Calu3 (cell line): ENCODE measurements at regions of chr15 and their contacts with region 1.

Region 1: DNA sequence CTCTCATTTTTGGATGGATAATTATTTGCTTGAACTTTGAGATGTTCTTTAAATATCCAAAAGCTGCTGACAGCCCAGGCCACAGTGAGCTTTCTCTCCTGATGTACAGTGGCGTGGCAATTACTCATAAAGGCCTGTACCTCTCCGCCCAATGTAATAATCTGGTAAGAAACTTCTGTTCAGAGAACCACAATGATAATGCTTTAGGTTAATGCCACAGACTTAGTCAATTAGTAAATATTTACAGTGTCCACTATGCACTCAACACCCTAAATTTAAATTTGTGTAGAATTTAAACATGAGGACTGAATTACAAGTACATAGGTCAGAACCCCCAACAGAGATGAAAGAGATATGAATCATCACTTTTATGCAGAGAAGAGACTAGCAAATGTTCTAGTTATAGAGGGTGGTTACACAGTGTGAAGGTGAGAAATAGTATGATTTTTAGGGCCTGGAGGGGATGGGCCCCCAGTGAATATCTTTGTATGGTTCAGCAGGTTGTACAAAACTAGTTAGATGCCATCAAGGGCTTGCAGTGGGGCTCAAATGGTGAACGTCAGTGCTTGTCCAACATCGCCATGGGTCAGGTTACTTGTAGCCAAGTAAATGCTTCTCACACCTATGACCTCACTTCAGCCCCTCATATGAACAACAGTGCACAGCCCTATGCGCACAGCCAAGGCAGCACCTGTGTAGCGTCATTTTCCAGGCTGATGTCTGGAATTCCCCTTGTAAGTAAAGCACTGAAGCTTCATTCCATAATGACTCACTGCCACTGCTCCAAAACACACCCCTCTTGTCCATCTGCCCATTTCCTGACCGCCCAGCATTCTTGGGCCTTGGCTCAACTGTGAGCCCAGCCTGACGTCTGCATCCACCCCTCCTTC is 13.3 kb downstream of the ABHD2 start:
- DNase-seq: peak; percentile 88
- H3K4me3 Mint-ChIP-seq: peak overlapping the region; percentile 1
- H3K27ac Mint-ChIP-seq: peak overlapping the region; percentile 69
- H3K4me1 Mint-ChIP-seq: peaks cover 66% of the 10 kb centered on the region
- H3K27me3 Mint-ChIP-seq: no peaks in the 10 kb centered on the region
- CTCF ChIP-seq: no peak

Region 2: DNA sequence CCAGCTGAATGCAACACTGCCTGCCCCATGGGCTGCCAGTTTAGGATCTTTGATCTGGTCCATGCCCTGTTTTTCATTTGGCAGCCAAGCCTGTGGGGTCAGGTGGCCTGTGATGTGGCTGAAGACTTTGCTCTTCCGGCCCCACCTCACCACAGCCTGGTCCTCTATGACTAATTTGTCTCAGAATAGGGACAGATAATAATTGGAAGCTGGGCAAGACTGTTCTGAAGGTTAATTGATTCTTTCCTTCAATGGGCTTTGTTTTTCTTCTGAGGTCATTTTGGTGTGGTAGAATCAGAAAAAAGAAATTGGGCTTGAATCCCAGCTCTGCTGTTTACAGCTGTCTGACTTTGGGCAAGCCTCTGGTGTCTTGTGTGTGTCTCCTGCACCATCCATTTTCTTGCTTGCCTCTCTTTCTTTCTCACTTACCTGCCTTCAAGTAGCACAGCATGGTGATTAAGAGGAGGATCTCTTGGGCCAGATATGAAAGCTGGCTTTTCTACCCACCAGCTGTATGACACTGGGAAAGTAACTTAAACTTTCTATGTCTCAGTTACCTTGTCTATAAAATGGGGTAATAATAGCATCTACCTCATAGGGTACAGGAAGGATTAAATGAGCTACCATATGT is 10.9 kb after region 1 on chr15:
- CTCF ChIA-PET with region 1: interaction called, 17 read pairs
- intact Hi-C with region 1: no loop called
- DNase-seq: peak; percentile 85
- H3K4me3 Mint-ChIP-seq: peak overlapping the region; percentile 8
- H3K27ac Mint-ChIP-seq: peak overlapping the region; percentile 87
- H3K4me1 Mint-ChIP-seq: peaks cover 77% of the 10 kb centered on the region
- H3K27me3 Mint-ChIP-seq: no peaks in the 10 kb centered on the region
- CTCF ChIP-seq: no peak

Region 3: DNA sequence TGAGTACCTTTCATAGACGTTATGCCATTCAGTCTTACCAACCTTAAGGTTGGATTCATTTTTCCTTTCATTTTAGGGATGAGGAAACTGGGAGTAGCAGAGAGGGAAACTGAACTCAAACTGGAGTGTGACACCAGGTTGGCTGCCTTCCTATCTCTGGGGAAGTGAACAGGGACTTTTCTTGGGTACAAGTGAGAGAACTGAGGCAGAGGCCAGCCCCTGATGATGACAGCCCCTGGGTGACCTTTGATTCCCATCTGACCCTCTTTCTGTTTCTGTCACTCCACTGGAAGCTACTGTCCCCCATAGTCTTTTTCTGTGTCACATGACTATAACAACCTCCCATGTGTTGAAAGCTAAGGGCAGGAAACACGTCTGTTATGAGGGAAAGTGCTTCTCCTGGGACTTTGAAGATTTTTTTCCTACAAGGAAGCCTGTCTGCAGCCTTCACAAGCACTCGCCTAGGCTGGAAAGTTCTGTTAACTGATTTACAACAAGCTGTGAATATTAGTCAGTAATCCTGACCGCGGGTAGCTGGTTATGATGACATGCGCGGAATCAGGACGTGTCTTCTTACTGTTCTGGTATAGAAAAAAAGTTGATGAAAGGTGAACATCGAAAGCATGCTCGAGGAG is 18.1 kb after region 1 on chr15:
- CTCF ChIA-PET with region 1: interaction called, 4 read pairs
- intact Hi-C with region 1: loop called (anchors 1 kb)
- DNase-seq: peak; percentile 62
- H3K4me3 Mint-ChIP-seq: peak overlapping the region; percentile 54
- H3K27ac Mint-ChIP-seq: peak overlapping the region; percentile 98
- H3K4me1 Mint-ChIP-seq: peaks cover 98% of the 10 kb centered on the region
- H3K27me3 Mint-ChIP-seq: no peaks in the 10 kb centered on the region
- CTCF ChIP-seq: no peak

Region 4: DNA sequence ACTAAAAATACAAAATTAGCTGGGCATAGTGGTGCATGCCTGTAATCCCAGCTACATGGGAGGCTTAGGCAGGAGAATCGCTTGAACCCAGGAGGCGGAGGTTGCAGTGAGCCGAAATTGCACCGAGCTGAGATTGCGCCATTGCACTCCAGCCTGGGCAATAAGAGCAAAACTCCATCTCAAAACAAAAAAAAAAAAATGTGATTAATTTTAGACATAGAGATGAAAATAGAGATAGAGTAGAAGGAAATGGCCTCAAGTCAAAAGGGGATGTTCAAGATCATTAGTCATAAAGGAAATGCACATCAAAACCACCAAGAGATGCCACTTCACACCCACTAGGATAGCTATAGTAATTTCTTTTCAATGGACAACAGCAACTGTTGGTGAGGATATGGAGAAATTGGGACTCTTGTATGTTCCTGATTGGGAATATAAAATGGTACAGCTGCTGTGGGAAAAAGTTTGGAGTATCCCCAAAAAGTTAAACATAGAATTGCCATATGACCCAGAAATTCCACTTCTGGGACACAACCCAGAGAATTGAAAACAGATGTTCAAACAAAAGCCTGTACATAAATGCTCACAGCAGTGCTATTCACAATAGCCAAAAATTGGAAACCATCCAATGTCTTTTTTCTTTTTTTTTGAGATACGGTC is 42.1 kb after region 1 on chr15:
- CTCF ChIA-PET with region 1: no interaction called
- intact Hi-C with region 1: no loop called
- DNase-seq: no peak
- H3K4me3 Mint-ChIP-seq: no peak overlapping the region
- H3K27ac Mint-ChIP-seq: no peak overlapping the region
- H3K4me1 Mint-ChIP-seq: peaks cover 10% of the 10 kb centered on the region
- H3K27me3 Mint-ChIP-seq: no peaks in the 10 kb centered on the region
- CTCF ChIP-seq: no peak